ENCODE measurements at regions of chr10 and their contacts with region 1.

Region 1: GRCh38 chr10:93406364-93407145 is 75.6 kb downstream of the MYOF start:
- DNase-seq: no peak
- H3K4me3 ChIP-seq: no peak overlapping the region
- H3K27ac ChIP-seq: no peak overlapping the region
- H3K4me1 ChIP-seq: 0 out of 2 replicates have a peak, but pooled peaks cover 8% of the 10 kb centered on the region
- H3K27me3 ChIP-seq: no peaks in the 10 kb centered on the region
- CTCF ChIP-seq: no peak

Region 2: DNA sequence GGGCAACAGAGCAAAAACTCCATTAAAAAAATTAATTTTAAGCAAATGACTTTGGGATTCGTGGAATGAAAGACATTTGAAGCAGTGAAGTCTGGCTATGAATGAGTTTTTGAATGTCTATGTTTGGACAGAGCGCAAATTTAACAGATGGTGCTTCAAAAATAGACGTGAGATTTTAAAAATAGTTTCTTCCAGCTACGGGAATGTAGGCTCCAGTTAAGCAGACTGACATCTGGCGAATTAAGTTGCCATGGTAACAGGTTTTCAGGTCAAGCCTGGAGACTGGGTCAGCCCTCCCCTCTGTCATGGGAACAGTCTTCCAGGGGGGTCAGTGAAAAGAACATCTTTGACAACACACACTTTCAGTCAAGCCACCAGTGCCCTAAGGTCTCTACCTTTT is 13.5 kb after region 1 on chr10:
- CTCF ChIA-PET with region 1: no interaction called
- POLR2A ChIA-PET with region 1: interaction called, 18 read pairs
- intact Hi-C with region 1: no loop called
- DNase-seq: no peak
- H3K4me3 ChIP-seq: no peak overlapping the region
- H3K27ac ChIP-seq: no peak overlapping the region
- H3K4me1 ChIP-seq: peaks cover 16% of the 10 kb centered on the region
- H3K27me3 ChIP-seq: no peaks in the 10 kb centered on the region
- CTCF ChIP-seq: no peak